Motor neuron (in vitro differentiated cells): ENCODE measurements at regions of chr6 and their contacts with region 1.

Region 1: DNA sequence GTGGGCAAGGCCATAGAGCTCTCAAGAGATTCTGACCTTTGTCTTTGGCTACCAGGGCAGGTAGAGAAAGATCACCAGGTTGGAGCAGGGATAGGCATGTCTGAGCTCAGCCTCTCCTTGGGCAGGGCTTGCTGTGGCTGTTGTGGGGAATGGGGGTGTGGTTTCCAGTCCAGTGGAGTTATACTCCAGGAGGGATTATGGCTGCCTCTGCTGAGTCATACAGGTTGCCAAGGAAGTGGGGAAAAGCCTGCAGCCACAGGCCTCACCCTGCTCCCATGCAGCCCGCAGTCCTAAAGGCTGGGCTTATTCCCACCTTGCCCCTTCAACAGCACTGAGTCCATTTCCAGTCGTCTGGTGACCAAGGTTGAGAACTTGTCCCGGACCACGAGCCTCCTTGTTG is 21.9 kb downstream of the MEP1A start:
- ATAC-seq: peak in 2 of 8 experiments; percentile 69 to 93
- H3K4me3 ChIP-seq: no peak overlapping the region
- H3K27ac ChIP-seq: no peak overlapping the region
- H3K4me1 ChIP-seq: no peaks in the 10 kb centered on the region

Region 2: DNA sequence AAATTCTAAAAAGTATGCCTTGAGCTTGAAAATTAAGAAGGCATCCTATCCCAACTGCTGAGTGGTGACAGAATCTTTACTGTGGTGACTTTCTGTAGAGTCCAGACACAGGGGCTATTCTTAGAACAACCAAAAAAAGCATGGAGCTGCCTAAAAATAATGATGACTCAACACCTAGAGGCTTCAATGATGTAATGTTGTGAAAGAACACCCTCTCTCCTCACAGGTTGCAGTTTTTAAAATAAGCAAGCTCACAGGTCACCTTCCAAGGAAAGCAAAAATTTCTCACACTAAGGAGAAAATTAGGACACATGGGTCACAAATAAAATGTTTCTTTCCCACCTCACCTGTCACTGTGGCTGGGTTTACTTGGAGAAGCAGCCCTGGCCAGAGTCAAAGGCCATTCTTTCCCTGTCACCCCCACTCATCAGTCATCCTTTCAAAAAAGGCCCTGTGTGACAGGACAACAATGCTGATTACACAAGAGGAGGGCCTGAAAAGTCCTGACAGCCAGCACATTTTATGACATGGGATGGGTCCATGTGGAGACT is 377.4 kb before region 1 on chr6:
- in situ Hi-C with region 1: loop called in 1 of 9 experiments (anchors 25 kb)
- ATAC-seq: peak in 6 of 8 experiments; percentile 34 to 76 (median 66)
- H3K4me3 ChIP-seq: no peak overlapping the region
- H3K27ac ChIP-seq: no peak overlapping the region
- H3K4me1 ChIP-seq: peaks cover 0 to 6% of the 10 kb centered on the region in 2 donors

Region 3: DNA sequence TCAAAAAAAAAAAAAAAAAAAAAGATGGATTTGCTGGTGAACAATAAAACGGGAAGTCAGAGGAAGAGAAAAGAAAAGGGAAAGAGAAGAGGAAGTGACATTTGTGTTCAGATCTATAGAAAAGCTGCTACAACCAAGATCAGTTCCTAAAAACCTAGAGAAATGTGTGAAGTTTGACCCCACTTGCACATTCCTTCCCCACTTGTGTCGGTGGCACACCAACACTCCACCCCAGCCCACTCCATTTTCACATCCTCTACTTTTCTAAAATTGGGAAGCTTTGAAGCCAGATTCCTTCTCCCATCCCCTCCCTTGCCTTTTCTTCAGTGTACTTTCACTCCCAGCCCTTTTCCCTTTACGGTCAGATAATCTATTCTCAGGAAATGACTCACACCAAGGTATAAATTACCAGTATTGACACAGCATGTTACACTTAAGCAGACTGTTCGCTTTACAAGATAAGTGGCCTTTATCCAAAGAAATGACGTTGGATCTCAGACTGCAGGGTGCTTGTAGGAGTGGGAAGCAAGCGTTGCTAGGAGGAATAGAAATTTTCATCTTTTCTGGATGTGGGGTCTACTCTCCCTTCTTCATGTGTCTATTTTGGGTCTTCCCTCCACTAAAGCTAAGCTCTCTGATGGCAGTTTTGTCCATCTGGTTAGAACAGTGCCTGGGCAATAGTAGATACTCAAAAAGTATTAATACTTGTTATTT is 319.5 kb after region 1 on chr6:
- in situ Hi-C with region 1: no loop called
- ATAC-seq: peak; percentile 60 to 94 (median 90)
- H3K4me3 ChIP-seq: no peak overlapping the region
- H3K27ac ChIP-seq: peak overlapping the region in 1 of 2 donors; percentile 62
- H3K4me1 ChIP-seq: peaks cover 13 to 21% of the 10 kb centered on the region in 2 donors

Region 4: GRCh38 chr6:47209632-47210031 is 394.5 kb after region 1 on chr6:
- in situ Hi-C with region 1: no loop called
- ATAC-seq: no peak
- H3K4me3 ChIP-seq: no peak overlapping the region
- H3K27ac ChIP-seq: no peak overlapping the region
- H3K4me1 ChIP-seq: peaks cover 0 to 5% of the 10 kb centered on the region in 2 donors